ENCODE measurements at regions of chr2 and their contacts with region 1.

Region 1: GRCh38 chr2:231925303-231926179 is 655 bp downstream of the NPPC start:
- DNase-seq: peak; percentile 67
- H3K4me3 ChIP-seq: no peak overlapping the region
- H3K27ac ChIP-seq: no peak overlapping the region
- H3K4me1 ChIP-seq: no peaks in the 10 kb centered on the region
- CTCF ChIP-seq: peak; percentile 84

Region 2: DNA sequence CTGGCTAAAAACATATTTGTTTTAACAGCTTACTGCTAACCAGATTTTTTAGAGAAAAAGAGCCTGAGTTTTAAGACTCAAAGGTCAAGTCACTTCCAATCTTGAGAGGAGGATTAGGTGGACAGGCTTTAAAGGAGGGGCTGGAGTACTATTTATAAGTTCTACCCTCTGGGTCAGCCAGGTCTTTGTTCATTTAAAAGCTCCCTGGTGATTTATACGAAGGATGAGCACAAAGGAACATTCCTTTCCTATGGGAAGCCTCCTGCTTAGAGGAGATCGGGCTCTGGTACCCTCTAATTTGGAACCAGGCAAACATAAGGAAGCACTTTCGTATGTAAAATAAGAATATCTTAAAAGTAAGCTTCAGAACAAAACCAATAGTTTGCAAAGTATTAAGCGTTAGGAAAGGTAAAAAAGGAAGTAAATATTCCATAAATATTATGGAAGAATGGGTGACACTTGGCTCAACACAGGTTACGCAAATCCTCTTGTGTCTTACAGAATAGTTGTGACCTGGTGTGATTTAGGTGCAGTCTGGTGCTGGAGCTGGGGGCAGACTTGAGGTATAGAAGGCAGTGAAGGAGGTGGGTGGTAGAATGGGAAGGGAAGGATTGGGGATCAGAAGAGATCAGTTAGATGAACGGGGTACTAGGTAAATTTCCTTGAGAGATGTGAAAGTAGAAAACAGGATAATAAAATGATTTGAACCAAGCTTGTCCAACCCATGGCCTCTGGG is 180.1 kb before region 1 on chr2:
- CTCF ChIA-PET with region 1: no interaction called
- POLR2A ChIA-PET with region 1: no interaction called
- intact Hi-C with region 1: no loop called
- DNase-seq: no peak
- H3K4me3 ChIP-seq: no peak overlapping the region
- H3K27ac ChIP-seq: no peak overlapping the region
- H3K4me1 ChIP-seq: no peaks in the 10 kb centered on the region
- CTCF ChIP-seq: no peak

Region 3: GRCh38 chr2:231807020-231807419 is 118.5 kb before region 1 on chr2:
- CTCF ChIA-PET with region 1: interaction called, 16 read pairs
- POLR2A ChIA-PET with region 1: no interaction called
- intact Hi-C with region 1: no loop called
- DNase-seq: no peak
- H3K4me3 ChIP-seq: no peak overlapping the region
- H3K27ac ChIP-seq: no peak overlapping the region
- H3K4me1 ChIP-seq: no peaks in the 10 kb centered on the region
- CTCF ChIP-seq: no peak

Region 4: DNA sequence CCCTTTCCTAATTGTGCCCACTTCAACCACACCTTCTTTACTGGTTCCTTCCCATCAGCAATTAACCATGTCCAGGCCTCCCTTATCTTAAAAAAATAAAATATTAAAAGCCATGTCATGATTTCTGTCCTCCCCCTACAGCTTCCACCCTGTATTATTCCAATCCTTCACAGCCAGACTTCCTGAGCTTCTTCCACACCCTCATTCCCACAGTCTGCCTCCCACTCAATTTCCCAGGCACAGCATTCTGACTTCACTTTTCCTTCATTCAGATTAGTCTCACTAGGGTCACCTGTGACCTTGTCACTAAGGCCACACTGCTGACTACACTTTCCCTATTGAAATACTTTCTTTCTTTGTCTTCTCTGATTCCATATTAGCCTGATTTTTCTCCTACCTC is 195.4 kb after region 1 on chr2:
- CTCF ChIA-PET with region 1: no interaction called
- POLR2A ChIA-PET with region 1: no interaction called
- intact Hi-C with region 1: no loop called
- DNase-seq: no peak
- H3K4me3 ChIP-seq: no peak overlapping the region
- H3K27ac ChIP-seq: no peak overlapping the region
- H3K4me1 ChIP-seq: no peaks in the 10 kb centered on the region
- CTCF ChIP-seq: no peak

Region 5: GRCh38 chr2:232327105-232328041 is 401.8 kb after region 1 on chr2:
- CTCF ChIA-PET with region 1: interaction called, 3 read pairs
- POLR2A ChIA-PET with region 1: no interaction called
- intact Hi-C with region 1: loop called (anchors 1 kb)
- DNase-seq: peak; percentile 67
- H3K4me3 ChIP-seq: no peak overlapping the region
- H3K27ac ChIP-seq: no peak overlapping the region
- H3K4me1 ChIP-seq: peaks cover 14% of the 10 kb centered on the region
- CTCF ChIP-seq: peak; percentile 78

Region 6: GRCh38 chr2:232658196-232658785 is 732.8 kb after region 1 on chr2:
- CTCF ChIA-PET with region 1: no interaction called
- POLR2A ChIA-PET with region 1: no interaction called
- intact Hi-C with region 1: no loop called
- DNase-seq: peak; percentile 10
- H3K4me3 ChIP-seq: no peak overlapping the region
- H3K27ac ChIP-seq: no peak overlapping the region
- H3K4me1 ChIP-seq: no peaks in the 10 kb centered on the region
- CTCF ChIP-seq: peak; percentile 52

Measured in OCI-LY7 (cell line).